ENCODE measurements at regions of chr17 and their contacts with region 1.

Region 1: DNA sequence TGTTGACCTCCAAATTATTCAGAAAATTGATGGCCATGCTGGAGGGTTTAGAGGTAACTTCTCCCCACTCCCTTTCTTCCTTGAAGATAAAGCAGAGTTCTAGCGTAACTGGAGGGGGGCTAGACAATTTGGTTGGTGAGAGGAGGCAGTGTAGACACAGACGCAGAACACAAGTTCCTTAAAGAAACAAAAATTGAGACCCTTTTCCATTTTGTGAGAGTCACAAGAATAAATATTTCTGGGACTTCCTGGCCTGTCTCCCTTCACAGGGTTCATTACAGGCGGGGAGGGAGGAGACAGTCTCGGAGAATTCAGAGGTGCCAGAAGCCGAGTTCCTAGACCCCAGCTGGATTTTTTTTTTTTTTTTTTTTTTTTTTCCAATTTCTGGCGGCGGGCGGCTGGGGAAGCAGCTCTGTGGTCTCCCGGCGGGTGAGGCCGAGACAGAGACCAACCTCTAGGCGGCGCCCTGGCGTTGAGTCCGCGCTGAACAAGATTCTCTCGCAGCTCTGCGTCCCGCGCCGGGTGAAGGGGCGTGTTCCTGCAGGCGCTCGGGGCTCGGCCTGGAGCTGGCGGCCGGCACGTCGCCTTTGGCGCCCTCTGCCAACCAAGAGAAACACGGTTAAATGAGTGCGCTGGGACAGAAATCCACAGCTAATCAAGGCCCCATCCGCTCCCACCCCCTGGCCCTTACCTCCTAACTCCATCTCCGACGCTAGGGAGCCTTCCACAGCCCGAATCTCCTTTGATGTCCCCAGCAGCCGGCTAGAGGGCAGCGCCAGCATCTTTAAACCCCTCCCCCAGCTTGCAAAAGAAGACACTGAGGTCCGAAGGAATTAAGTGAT is 10.2 kb upstream of the HOXB9 start:
- DNase-seq: peak; percentile 91
- H3K4me3 ChIP-seq: peak overlapping the region in 1 of 2 experiments; percentile 21; a peak in 1 of 4 replicates
- H3K27ac ChIP-seq: no peak overlapping the region
- H3K4me1 ChIP-seq: no peaks in the 10 kb centered on the region
- H3K27me3 ChIP-seq: peaks cover 100% of the 10 kb centered on the region
- CTCF ChIP-seq: peak; percentile 69
- EP300 ChIP-seq: no peak
- RAD21 ChIP-seq: no peak

Region 2: GRCh38 chr17:48625495-48626244 is 10.7 kb before region 1 on chr17:
- CTCF ChIA-PET with region 1: interaction called, 50 read pairs
- POLR2A ChIA-PET with region 1: no interaction called
- DNase-seq: no peak
- H3K4me3 ChIP-seq: no peak overlapping the region
- H3K27ac ChIP-seq: no peak overlapping the region
- H3K4me1 ChIP-seq: no peaks in the 10 kb centered on the region
- H3K27me3 ChIP-seq: peaks cover 98% of the 10 kb centered on the region
- CTCF ChIP-seq: no peak
- EP300 ChIP-seq: no peak
- RAD21 ChIP-seq: no peak

Region 3: GRCh38 chr17:48647103-48647962 is 10.9 kb after region 1 on chr17:
- CTCF ChIA-PET with region 1: interaction called, 11 read pairs
- POLR2A ChIA-PET with region 1: no interaction called
- DNase-seq: peak; percentile 42
- H3K4me3 ChIP-seq: peak overlapping the region in 1 of 2 experiments; percentile 56; a peak in 2 of 4 replicates
- H3K27ac ChIP-seq: no peak overlapping the region
- H3K4me1 ChIP-seq: no peaks in the 10 kb centered on the region
- H3K27me3 ChIP-seq: peaks cover 84% of the 10 kb centered on the region
- CTCF ChIP-seq: no peak
- EP300 ChIP-seq: no peak
- RAD21 ChIP-seq: no peak

Measured in SK-N-SH (cell line).